Common myeloid progenitor, CD34-positive (primary cell): ENCODE measurements at regions of chr2 and their contacts with region 1.

Region 1: DNA sequence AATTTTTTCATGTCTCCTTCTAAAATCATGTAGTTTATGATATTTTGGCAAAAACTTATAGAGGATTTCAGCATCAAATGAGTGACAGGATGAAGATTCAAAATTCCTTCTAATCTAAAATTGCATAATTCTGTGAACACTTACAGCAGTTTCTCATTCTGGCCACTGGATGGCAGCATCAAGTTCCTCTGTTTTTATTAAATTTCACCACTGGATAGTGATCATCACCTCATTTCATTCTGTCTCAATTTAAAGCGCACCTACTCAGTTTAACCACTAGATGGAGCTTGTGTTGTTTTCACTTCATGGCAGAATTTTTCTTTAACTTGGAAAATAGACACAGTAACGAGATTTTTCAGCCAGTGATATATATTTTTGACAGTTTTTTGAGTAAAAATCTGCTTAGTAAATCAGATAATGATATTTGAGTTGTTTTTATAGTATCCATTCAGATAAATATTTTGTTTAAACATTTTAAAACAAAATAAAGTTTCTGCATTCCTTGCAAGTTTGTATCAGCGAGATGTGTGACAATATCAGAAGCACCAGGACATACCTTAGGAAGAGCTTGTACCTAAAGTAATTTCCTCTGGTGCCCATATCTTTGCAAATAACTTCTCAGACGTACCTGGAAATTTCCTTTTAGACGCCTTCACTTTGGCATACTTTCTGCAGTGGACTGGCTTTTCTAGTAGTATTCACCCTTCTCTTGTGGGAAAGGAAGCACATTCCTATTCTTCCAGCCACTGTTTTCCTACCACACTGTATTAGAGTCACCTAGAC is 94.7 kb upstream of the ARHGAP15 start:
- DNase-seq: peak; percentile 81 to 90 (median 89)
- H3K4me3 ChIP-seq: no peak overlapping the region
- H3K27ac ChIP-seq: no peak overlapping the region
- H3K4me1 ChIP-seq: peaks cover 0 to 6% (median 1%) of the 10 kb centered on the region in 4 experiments
- H3K27me3 ChIP-seq: no peaks in the 10 kb centered on the region

Region 2: GRCh38 chr2:143225931-143226330 is 191.4 kb after region 1 on chr2:
- CTCF ChIA-PET with region 1: interaction called, 10 read pairs
- POLR2A ChIA-PET with region 1: no interaction called
- DNase-seq: no peak
- H3K4me3 ChIP-seq: no peak overlapping the region
- H3K27ac ChIP-seq: no peak overlapping the region
- H3K4me1 ChIP-seq: no peaks in the 10 kb centered on the region
- H3K27me3 ChIP-seq: no peaks in the 10 kb centered on the region